Thyroid gland (tissue), 4 donors: ENCODE measurements at regions of chr5 and their contacts with region 1.

Region 1: DNA sequence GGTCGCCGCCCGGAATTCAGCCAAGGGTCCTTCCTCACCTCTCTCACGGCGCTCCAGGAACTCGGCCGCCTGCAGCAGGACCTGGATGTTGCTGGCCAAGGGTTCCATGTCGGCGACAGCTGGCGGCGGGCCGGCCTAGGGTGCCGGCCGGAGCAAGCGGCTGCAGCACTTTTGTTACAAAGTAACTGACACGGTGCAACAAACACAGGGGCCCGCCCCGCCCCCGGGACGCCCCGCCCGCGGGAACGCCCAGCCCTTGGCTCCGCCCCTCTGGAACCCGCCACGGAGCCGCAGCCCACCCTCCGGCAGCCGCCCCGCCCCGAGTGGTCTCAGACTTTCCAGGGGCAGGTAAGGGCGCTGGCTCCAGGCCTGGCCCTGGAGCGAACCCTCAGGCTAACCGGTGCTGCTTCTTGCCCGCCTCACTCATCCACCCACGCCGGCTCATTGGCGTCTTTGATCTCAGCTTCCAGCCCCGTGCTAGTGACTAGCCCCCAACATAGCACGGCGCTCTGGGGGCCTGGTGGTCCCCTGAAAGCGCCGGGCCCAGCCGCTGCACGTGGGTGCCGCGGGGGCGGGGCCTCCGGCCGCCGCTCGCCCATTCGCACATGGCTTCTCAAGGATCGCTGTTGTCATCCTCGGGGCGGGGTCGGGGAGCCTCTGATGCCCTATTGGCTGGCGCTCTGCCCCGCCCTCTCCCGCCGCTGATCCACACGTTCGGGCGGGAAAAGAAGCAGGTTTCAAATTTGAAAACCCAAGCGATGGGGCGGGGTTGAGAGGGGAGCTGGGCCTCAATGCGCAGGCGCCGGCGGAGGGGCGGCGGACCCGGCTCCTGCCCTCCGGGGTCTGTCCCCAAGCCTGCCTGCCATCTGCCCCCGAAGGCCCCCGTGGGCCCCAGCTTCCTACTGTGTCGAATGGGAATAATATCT is at the start of gene MXD3:
- DNase-seq: peak; percentile 98 to 99
- H3K4me3 ChIP-seq: peak within 1 kb of the TSS in 2 of 3 donors; percentile 2 to 40
- H3K27ac ChIP-seq: no peak within 1 kb of the TSS
- H3K4me1 ChIP-seq: peaks cover 14 to 20% of the 10 kb centered on the region in 2 donors
- H3K27me3 ChIP-seq: no peaks in the 10 kb centered on the region
- CTCF ChIP-seq: no peak
- POLR2A ChIP-seq: no peak
- total RNA-seq, gene MXD3: 2.0 to 11.7 (median 7.8) TPM

Region 2: GRCh38 chr5:177113566-177114424 is 198.2 kb before region 1 on chr5:
- intact Hi-C with region 1: loop called (anchors 5 kb)
- DNase-seq: peak; percentile 74 to 80
- H3K4me3 ChIP-seq: no peak overlapping the region
- H3K27ac ChIP-seq: no peak overlapping the region
- H3K4me1 ChIP-seq: peaks cover 0 to 17% of the 10 kb centered on the region in 2 donors
- H3K27me3 ChIP-seq: no peaks in the 10 kb centered on the region
- CTCF ChIP-seq: peak; percentile 98 to 99 (median 99)
- POLR2A ChIP-seq: no peak

Region 3: GRCh38 chr5:177128551-177128981 is 183.4 kb before region 1 on chr5:
- intact Hi-C with region 1: loop called (anchors 5 kb)
- DNase-seq: no peak
- H3K4me3 ChIP-seq: no peak overlapping the region
- H3K27ac ChIP-seq: peak overlapping the region in 1 of 3 donors; percentile 8
- H3K4me1 ChIP-seq: peaks cover 6 to 20% of the 10 kb centered on the region in 2 donors
- H3K27me3 ChIP-seq: no peaks in the 10 kb centered on the region
- CTCF ChIP-seq: no peak
- POLR2A ChIP-seq: no peak

Region 4: GRCh38 chr5:177351385-177352329 is 39.7 kb after region 1 on chr5 and contains the start of gene LMAN2:
- intact Hi-C with region 1: loop called (anchors 5 kb)
- DNase-seq: peak; percentile 93 to 95
- H3K4me3 ChIP-seq: peak within 1 kb of the TSS; percentile 66 to 93 (median 82)
- H3K27ac ChIP-seq: peak within 1 kb of the TSS; percentile 86 to 90 (median 86)
- H3K4me1 ChIP-seq: peaks cover 14 to 27% of the 10 kb centered on the region in 2 donors
- H3K27me3 ChIP-seq: no peaks in the 10 kb centered on the region
- CTCF ChIP-seq: no peak
- POLR2A ChIP-seq: peak in 1 of 2 donors; percentile 60
- total RNA-seq, gene LMAN2: 309 to 465 (median 383) TPM

Region 5: GRCh38 chr5:177368869-177369644 is 57.1 kb after region 1 on chr5:
- intact Hi-C with region 1: loop called (anchors 5 kb)
- DNase-seq: peak in 1 of 2 donors; percentile 28
- H3K4me3 ChIP-seq: no peak overlapping the region
- H3K27ac ChIP-seq: no peak overlapping the region
- H3K4me1 ChIP-seq: peaks cover 18 to 33% of the 10 kb centered on the region in 2 donors
- H3K27me3 ChIP-seq: no peaks in the 10 kb centered on the region
- CTCF ChIP-seq: peak in 4 of 6 experiments; percentile 43 to 60 (median 44)
- POLR2A ChIP-seq: no peak